T-cell (primary cell): ENCODE measurements at regions of chrX and their contacts with region 1.

Region 1: GRCh38 chrX:130772105-130772775 is 130.8 kb downstream of the ENOX2 start:
- DNase-seq: no peak
- ATAC-seq: no peak
- H3K4me3 ChIP-seq: no peak overlapping the region
- H3K4me3 Mint-ChIP-seq: no peak overlapping the region
- H3K27ac ChIP-seq: no peak overlapping the region
- H3K27ac Mint-ChIP-seq: no peak overlapping the region
- H3K4me1 ChIP-seq: no peaks in the 10 kb centered on the region
- H3K4me1 Mint-ChIP-seq: no peaks in the 10 kb centered on the region
- H3K27me3 ChIP-seq: no peaks in the 10 kb centered on the region
- H3K27me3 Mint-ChIP-seq: peaks cover 0 to 7% of the 10 kb centered on the region in 2 donors

Region 2: GRCh38 chrX:130788786-130789581 is 16.7 kb after region 1 on chrX:
- CTCF ChIA-PET with region 1: no interaction called
- POLR2A ChIA-PET with region 1: interaction called in 1 of 2 experiments, 11 read pairs
- DNase-seq: no peak
- ATAC-seq: no peak
- H3K4me3 ChIP-seq: no peak overlapping the region
- H3K4me3 Mint-ChIP-seq: no peak overlapping the region
- H3K27ac ChIP-seq: no peak overlapping the region
- H3K27ac Mint-ChIP-seq: no peak overlapping the region
- H3K4me1 ChIP-seq: no peaks in the 10 kb centered on the region
- H3K4me1 Mint-ChIP-seq: no peaks in the 10 kb centered on the region
- H3K27me3 ChIP-seq: no peaks in the 10 kb centered on the region
- H3K27me3 Mint-ChIP-seq: peaks cover 0 to 3% of the 10 kb centered on the region in 2 donors